ENCODE measurements at regions of chr3 and their contacts with region 1.

Region 1: DNA sequence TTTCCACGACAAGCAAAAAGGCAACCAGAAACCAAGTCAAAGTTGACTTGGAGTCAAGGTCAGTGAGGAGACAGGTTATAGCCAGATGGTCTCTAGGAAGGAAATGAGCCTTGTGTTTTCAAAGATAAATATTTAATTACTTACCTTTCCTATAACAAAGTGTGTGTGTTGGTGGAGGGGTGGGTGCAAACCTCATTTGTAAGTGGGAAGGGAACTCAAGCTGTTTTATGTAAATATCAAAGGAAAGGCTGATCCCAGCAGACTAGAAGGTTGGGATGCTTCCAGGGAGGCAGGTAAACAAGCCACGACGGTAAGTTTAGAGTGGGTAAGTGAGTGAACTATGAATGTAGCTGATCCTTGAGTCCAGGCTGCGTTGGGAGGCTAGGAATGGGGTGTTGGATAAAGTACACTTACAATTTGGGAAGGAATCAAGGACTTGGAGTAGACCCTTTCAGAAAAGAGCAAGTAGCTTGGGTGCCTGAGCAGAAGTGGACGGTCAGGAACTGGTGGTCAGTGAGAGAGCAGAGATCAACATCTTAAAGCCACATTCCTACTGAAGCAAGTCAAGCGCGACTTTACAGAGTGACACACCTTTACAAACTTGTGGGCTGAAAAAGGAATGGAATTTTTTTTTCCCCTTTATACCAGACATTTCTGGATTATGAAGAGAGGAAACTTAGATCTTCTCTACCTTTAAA is 82.0 kb upstream of the TBL1XR1 start:
- DNase-seq: no peak
- H3K4me3 ChIP-seq: no peak overlapping the region
- H3K27ac ChIP-seq: no peak overlapping the region
- H3K4me1 ChIP-seq: no peaks in the 10 kb centered on the region
- H3K27me3 ChIP-seq: no peaks in the 10 kb centered on the region
- CTCF ChIP-seq: no peak
- POLR2A ChIP-seq: no peak

Region 2: GRCh38 chr3:177185035-177185574 is 94.2 kb before region 1 on chr3:
- intact Hi-C with region 1: no loop called
- DNase-seq: no peak
- H3K4me3 ChIP-seq: no peak overlapping the region
- H3K27ac ChIP-seq: no peak overlapping the region
- H3K4me1 ChIP-seq: peaks cover 0 to 3% of the 10 kb centered on the region in 2 donors
- H3K27me3 ChIP-seq: no peaks in the 10 kb centered on the region
- CTCF ChIP-seq: no peak
- POLR2A ChIP-seq: no peak

Region 3: DNA sequence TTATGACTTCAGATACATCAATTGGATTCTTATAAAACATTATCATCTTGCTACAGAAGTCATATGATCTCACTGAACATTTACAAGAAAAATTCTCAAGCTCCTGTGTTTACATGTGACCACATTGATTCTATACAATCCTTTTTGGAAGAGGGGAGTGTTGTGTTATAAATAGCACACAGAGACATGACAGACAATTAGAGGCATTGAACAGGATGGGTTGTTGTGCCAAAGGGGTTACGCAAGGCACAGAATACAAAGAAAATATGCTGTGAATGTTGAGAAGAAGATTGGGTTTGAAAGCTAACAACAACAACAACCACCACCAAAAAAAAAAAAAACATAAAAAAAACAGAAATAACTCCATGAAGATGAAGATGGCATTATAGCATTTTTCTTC is 49.5 kb before region 1 on chr3:
- intact Hi-C with region 1: loop called (anchors 2 kb)
- DNase-seq: no peak
- H3K4me3 ChIP-seq: no peak overlapping the region
- H3K27ac ChIP-seq: no peak overlapping the region
- H3K4me1 ChIP-seq: no peaks in the 10 kb centered on the region
- H3K27me3 ChIP-seq: no peaks in the 10 kb centered on the region
- CTCF ChIP-seq: no peak
- POLR2A ChIP-seq: no peak

Measured in breast epithelium (tissue), 4 donors.